ENCODE measurements at regions of chr17 and their contacts with region 1.

Region 1: GRCh38 chr17:19447085-19447583 is 36.1 kb downstream of the RNF112 start:
- H3K4me3 ChIP-seq: no peak overlapping the region
- H3K27ac ChIP-seq: no peak overlapping the region
- H3K4me1 ChIP-seq: peaks cover 8% of the 10 kb centered on the region
- CTCF ChIP-seq: peak; percentile 55; the same call in 1 of the 2 replicates

Region 2: GRCh38 chr17:19377602-19378392 is 69.3 kb before region 1 on chr17:
- CTCF ChIA-PET with region 1: interaction called, 14 read pairs
- POLR2A ChIA-PET with region 1: interaction called, 12 read pairs
- H3K4me3 ChIP-seq: peak overlapping the region; percentile 80
- H3K27ac ChIP-seq: peak overlapping the region; percentile 72
- H3K4me1 ChIP-seq: peaks cover 8% of the 10 kb centered on the region
- CTCF ChIP-seq: no peak; the same call in 1 of the 2 replicates

Region 3: DNA sequence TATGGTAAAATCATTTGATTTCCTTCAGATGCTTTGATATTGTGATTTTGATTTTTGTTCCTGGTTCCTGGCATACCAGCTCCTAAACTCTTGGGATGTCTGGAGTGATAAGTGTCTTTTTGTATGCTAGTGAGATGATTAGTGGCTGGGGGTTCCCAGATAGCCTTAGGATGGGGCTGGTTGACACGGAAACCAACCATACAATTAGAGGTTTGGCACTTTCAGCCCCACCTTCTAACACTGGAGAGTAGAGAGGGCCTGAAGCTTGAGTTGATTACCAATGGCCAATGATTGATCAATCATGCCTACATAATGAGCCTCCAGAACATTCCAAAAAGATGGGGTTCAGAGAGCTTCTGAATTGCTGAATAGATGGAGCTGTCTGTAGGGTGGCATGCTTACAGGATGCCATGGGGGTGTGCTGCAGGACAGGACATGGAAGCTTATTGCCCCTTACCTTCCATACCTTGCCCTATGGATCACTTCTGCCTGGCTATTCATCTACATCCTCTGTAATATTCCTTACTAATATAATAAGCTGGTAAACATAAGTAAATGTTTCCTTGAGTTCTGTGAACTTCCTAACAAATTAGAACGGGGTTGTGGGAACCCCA is 13.3 kb before region 1 on chr17:
- CTCF ChIA-PET with region 1: interaction called, 22 read pairs
- POLR2A ChIA-PET with region 1: no interaction called
- H3K4me3 ChIP-seq: no peak overlapping the region
- H3K27ac ChIP-seq: no peak overlapping the region
- H3K4me1 ChIP-seq: no peaks in the 10 kb centered on the region
- CTCF ChIP-seq: peak; percentile 36; the same call in 1 of the 2 replicates

Region 4: GRCh38 chr17:19460700-19461099 is 13.6 kb after region 1 on chr17:
- CTCF ChIA-PET with region 1: interaction called, 24 read pairs
- POLR2A ChIA-PET with region 1: no interaction called
- H3K4me3 ChIP-seq: no peak overlapping the region
- H3K27ac ChIP-seq: no peak overlapping the region
- H3K4me1 ChIP-seq: no peaks in the 10 kb centered on the region
- CTCF ChIP-seq: no peak

Region 5: DNA sequence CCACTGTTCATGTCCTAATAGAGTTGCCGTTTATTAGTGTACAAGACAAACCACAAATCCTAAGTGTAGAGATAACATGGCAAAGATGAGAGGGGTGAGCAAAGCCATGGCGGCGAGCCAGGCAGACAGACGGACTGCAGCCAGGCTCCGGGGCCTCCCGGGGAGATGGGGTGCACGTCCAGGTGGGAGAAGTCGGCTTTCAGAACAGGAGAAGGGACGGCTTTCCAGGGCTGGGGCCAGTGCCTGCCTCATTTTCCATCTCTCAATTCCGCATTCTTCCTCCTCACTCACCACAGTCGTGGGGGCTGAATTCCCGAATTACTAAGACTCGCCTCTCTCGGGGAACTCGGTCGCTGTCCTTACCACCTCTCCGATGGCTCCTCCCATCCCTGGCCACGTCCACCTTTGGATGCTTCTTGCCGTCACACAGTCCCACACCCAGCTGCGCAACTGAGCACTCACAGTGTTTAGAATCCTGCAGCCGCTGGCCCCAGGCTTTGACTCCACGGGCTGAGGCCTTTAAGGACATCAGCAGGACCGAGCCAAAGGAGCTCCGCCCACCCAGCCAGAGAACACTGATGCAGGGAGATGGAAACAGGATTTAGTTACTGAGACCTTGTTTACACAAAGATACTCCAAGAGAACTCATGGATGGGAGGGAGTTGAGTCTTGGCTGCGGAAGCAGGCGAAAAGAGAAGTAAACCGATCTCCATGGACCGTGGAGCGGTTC is 23.6 kb after region 1 on chr17:
- CTCF ChIA-PET with region 1: interaction called, 11 read pairs
- POLR2A ChIA-PET with region 1: no interaction called
- H3K4me3 ChIP-seq: no peak overlapping the region
- H3K27ac ChIP-seq: peak overlapping the region; percentile 1; the same call in 1 of the 2 replicates
- H3K4me1 ChIP-seq: peaks cover 6% of the 10 kb centered on the region
- CTCF ChIP-seq: no peak

Region 6: GRCh38 chr17:19494961-19495806 is 48.0 kb after region 1 on chr17:
- CTCF ChIA-PET with region 1: no interaction called
- POLR2A ChIA-PET with region 1: no interaction called
- H3K4me3 ChIP-seq: no peak overlapping the region
- H3K27ac ChIP-seq: no peak overlapping the region
- H3K4me1 ChIP-seq: no peaks in the 10 kb centered on the region
- CTCF ChIP-seq: no peak

Region 7: GRCh38 chr17:19538095-19539039 is 91.2 kb after region 1 on chr17:
- CTCF ChIA-PET with region 1: no interaction called
- POLR2A ChIA-PET with region 1: no interaction called
- H3K4me3 ChIP-seq: no peak overlapping the region
- H3K27ac ChIP-seq: no peak overlapping the region
- H3K4me1 ChIP-seq: 0 out of 2 replicates have a peak, but pooled peaks cover under 1% of the 10 kb centered on the region
- CTCF ChIP-seq: no peak

Measured in HEK293 (cell line).